CD4-positive, alpha-beta memory T cell (primary cell): ENCODE measurements at regions of chr3 and their contacts with region 1.

Region 1: GRCh38 chr3:50611464-50612233 is at the start of gene CISH:
- DNase-seq: peak; percentile 90 to 94 (median 93)
- H3K4me3 ChIP-seq: peak within 1 kb of the TSS; percentile 93 to 96
- H3K4me3 Mint-ChIP-seq: peak within 1 kb of the TSS; percentile 92 to 99 (median 96)
- H3K27ac ChIP-seq: peak within 1 kb of the TSS; percentile 81
- H3K27ac Mint-ChIP-seq: peak within 1 kb of the TSS; percentile 90 to 97 (median 94)
- H3K4me1 ChIP-seq: peaks cover 66% of the 10 kb centered on the region
- H3K4me1 Mint-ChIP-seq: peaks cover 44 to 80% (median 63%) of the 10 kb centered on the region in 4 donors
- H3K27me3 ChIP-seq: no peaks in the 10 kb centered on the region
- H3K27me3 Mint-ChIP-seq: no peaks in the 10 kb centered on the region
- total RNA-seq, gene CISH: 14.7 to 15.2 TPM

Region 2: GRCh38 chr3:50316657-50317242 is 294.9 kb before region 1 on chr3:
- CTCF ChIA-PET with region 1: no interaction called
- POLR2A ChIA-PET with region 1: no interaction called
- intact Hi-C with region 1: no loop called
- DNase-seq: peak; percentile 62 to 92 (median 72)
- H3K4me3 ChIP-seq: peak overlapping the region in 1 of 2 donors; percentile 7
- H3K4me3 Mint-ChIP-seq: peak overlapping the region; percentile 74 to 92 (median 86)
- H3K27ac ChIP-seq: peak overlapping the region; percentile 49
- H3K27ac Mint-ChIP-seq: peak overlapping the region; percentile 79 to 99 (median 94)
- H3K4me1 ChIP-seq: peaks cover 41% of the 10 kb centered on the region
- H3K4me1 Mint-ChIP-seq: peaks cover 22 to 52% (median 37%) of the 10 kb centered on the region in 4 donors
- H3K27me3 ChIP-seq: no peaks in the 10 kb centered on the region
- H3K27me3 Mint-ChIP-seq: no peaks in the 10 kb centered on the region

Region 3: DNA sequence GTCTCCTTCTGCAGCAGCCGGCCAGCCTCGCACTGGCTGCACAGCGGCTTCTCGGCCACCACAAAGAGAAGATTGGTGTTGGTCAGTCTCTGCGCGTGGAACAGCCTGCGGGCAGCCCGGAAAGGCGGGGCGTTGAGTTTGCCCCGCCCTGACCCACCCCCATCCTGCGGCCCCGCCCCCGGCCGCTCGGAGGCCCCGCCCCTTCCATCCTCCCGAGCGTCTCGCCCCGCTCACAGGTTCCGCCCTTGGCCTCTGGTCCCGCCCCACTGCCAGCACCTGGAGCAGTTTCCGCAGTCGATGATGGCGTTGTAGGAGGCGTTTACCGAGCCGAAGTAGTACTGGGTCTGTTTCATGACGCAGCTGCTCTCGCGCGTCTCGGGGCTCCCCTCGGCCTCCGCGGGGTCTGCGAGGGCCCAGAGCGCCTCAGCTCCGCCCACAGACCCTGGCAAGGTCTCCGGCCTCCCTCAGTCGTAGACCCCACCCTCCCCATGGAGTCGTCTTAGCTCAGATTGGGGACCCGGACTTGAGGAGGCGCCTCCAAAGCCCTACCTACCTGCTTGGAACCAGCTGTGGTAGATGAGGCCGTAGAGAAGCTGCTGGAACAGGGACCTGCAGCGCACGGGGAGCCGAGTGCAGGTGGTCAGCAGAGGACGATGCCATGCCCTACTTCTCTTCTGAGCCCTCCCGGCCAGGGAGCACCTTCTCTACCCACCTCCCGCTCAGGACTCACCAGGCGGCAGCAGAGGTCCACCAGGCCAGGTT is 246.4 kb before region 1 on chr3:
- CTCF ChIA-PET with region 1: no interaction called
- POLR2A ChIA-PET with region 1: interaction called, 6 read pairs
- intact Hi-C with region 1: loop called (anchors 5 kb)
- DNase-seq: peak; percentile 92 to 97 (median 95)
- H3K4me3 ChIP-seq: peak overlapping the region; percentile 73 to 100
- H3K4me3 Mint-ChIP-seq: peak overlapping the region; percentile 86 to 94 (median 90)
- H3K27ac ChIP-seq: peak overlapping the region; percentile 87
- H3K27ac Mint-ChIP-seq: peak overlapping the region; percentile 91 to 97 (median 95)
- H3K4me1 ChIP-seq: peaks cover 30% of the 10 kb centered on the region
- H3K4me1 Mint-ChIP-seq: peaks cover 4 to 35% (median 18%) of the 10 kb centered on the region in 4 donors
- H3K27me3 ChIP-seq: no peaks in the 10 kb centered on the region
- H3K27me3 Mint-ChIP-seq: peaks cover 0 to 1% of the 10 kb centered on the region in 2 donors

Region 4: GRCh38 chr3:50587806-50588758 is 23.6 kb before region 1 on chr3:
- CTCF ChIA-PET with region 1: interaction called, 996 read pairs
- POLR2A ChIA-PET with region 1: interaction called, 1,072 read pairs
- intact Hi-C with region 1: loop called (anchors 1 kb)
- DNase-seq: peak in 4 of 5 donors; percentile 33 to 81 (median 39)
- H3K4me3 ChIP-seq: peak overlapping the region in 1 of 2 donors; percentile 29
- H3K4me3 Mint-ChIP-seq: peak overlapping the region; percentile 52 to 84 (median 74)
- H3K27ac ChIP-seq: peak overlapping the region; percentile 51
- H3K27ac Mint-ChIP-seq: peak overlapping the region; percentile 83 to 97 (median 93)
- H3K4me1 ChIP-seq: peaks cover 74% of the 10 kb centered on the region
- H3K4me1 Mint-ChIP-seq: peaks cover 44 to 79% (median 60%) of the 10 kb centered on the region in 4 donors
- H3K27me3 ChIP-seq: no peaks in the 10 kb centered on the region
- H3K27me3 Mint-ChIP-seq: no peaks in the 10 kb centered on the region

Region 5: DNA sequence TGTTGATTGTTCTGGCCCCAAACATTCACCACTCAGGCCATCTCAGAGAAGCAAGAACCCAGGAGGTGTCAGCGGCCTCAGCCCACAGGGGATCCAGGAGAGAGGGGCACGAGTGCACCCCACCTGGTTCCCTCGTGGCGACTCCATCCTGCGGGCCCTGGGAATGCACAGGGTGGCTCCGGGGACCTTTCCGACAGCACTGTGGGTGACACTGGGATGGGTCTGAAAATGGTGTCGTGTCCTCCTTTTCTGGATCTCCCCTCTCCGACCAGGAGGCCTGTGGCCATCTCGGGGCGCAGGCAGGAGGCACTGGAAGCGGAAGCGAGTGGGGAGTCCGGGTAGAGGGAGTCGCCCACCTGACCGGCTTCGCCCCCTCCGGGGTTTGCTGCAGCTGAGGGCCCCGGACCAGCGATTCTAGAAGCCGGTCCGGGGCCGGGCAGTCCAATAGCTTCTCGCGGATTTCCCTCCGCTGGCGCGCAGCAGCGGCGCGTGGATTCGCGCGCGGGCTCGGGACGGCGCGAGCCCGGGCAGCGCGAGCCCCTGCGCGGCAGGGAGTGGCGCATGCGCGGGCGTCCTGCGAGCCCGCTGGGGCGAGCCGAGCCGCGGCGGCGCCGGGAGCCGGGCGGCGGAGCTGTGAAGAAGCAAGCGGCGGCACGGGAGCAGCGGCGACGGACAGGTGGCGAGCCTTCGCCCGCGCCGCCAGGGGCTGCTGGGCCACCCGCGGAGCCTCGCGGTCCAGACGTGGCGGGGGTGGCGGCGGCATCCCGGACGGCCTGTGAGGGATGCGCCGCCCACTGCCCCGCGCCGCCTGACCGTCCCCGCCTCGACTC is 62.9 kb after region 1 on chr3 and contains the start of gene DOCK3:
- CTCF ChIA-PET with region 1: interaction called, 7 read pairs
- POLR2A ChIA-PET with region 1: interaction called, 5 read pairs
- intact Hi-C with region 1: loop called (anchors 1 kb)
- DNase-seq: peak; percentile 49 to 72 (median 70)
- H3K4me3 ChIP-seq: peak within 1 kb of the TSS in 1 of 2 donors; percentile 44
- H3K4me3 Mint-ChIP-seq: peak within 1 kb of the TSS; percentile 55 to 89 (median 82)
- H3K27ac ChIP-seq: no peak within 1 kb of the TSS
- H3K27ac Mint-ChIP-seq: peak within 1 kb of the TSS in 6 of 7 donors; percentile 4 to 76 (median 32)
- H3K4me1 ChIP-seq: peaks cover 9% of the 10 kb centered on the region
- H3K4me1 Mint-ChIP-seq: peaks cover 2 to 9% (median 6%) of the 10 kb centered on the region in 4 donors
- H3K27me3 ChIP-seq: peaks cover 4% of the 10 kb centered on the region
- H3K27me3 Mint-ChIP-seq: peaks cover 7 to 8% of the 10 kb centered on the region in 2 donors
- total RNA-seq, gene DOCK3: 2.5 to 2.6 TPM

Region 6: DNA sequence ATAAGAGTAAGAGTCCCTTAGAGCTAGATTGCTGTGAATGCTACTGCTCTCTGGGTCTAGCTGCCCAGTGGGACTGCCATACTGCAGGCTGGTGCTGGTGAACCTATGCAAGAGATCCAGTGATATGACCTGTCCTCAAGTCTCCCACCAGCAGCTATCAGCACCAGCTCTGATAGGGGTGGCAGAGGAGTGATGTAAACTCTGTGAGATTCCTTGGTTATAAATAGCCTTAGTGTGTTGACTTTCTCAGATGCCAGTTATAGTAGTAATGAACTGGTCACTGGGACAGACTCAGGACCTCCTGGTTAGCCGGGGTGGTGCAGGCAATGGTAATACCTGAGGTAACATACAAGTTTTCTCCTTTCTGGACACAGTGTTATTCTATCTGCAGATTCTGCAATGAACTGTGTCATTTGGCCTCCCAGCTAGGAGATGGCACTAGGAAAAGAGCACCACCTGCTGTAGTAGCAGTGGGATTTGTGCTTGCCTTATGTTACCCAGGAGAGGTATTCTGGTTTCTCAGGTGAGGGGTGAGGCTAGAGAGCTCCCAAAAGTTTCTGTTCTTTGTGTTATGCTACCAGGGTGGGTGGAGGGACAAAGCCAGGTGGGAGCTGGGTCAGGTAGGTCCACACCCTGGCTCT is 578.7 kb after region 1 on chr3:
- CTCF ChIA-PET with region 1: interaction called, 9 read pairs
- POLR2A ChIA-PET with region 1: no interaction called
- intact Hi-C with region 1: loop called (anchors 2 kb)
- DNase-seq: peak in 4 of 5 donors; percentile 6 to 10 (median 7)
- H3K4me3 ChIP-seq: no peak overlapping the region
- H3K4me3 Mint-ChIP-seq: no peak overlapping the region
- H3K27ac ChIP-seq: no peak overlapping the region
- H3K27ac Mint-ChIP-seq: peak overlapping the region in 1 of 7 donors; percentile 45
- H3K4me1 ChIP-seq: no peaks in the 10 kb centered on the region
- H3K4me1 Mint-ChIP-seq: peaks cover 0 to 9% (median 8%) of the 10 kb centered on the region in 4 donors
- H3K27me3 ChIP-seq: no peaks in the 10 kb centered on the region
- H3K27me3 Mint-ChIP-seq: peaks cover 0 to 2% of the 10 kb centered on the region in 2 donors

Region 7: DNA sequence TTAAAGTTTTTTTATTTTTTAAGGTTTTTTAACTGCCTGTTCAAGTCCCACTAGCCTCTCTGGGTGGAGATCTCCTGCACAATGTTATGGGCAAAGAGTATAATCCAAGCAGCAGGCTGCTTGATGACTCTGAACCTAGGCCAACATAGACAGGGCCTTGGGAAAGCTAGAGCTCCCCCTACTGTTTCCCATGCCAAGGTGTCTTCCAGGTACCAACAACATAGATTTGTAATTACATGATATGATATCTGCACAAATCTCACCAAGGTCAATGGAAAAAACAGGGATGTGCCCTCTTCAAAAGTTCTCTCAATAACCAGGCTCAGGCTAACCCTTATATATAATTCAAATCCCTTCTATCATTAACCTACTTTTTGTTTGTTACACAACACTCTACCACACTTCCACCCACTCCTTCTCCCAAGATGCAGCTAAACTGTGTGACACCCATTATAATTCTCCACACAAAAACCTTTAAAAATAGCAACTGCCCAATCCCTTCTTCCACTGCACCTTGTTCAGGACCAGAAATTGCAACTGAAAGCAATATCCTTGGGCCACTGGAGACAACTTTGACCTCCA is 823.2 kb after region 1 on chr3:
- CTCF ChIA-PET with region 1: interaction called, 5 read pairs
- POLR2A ChIA-PET with region 1: no interaction called
- intact Hi-C with region 1: loop called (anchors 1 kb)
- DNase-seq: peak; percentile 48 to 56 (median 53)
- H3K4me3 ChIP-seq: no peak overlapping the region
- H3K4me3 Mint-ChIP-seq: no peak overlapping the region
- H3K27ac ChIP-seq: no peak overlapping the region
- H3K27ac Mint-ChIP-seq: peak overlapping the region in 6 of 7 donors; percentile 31 to 81 (median 55)
- H3K4me1 ChIP-seq: no peaks in the 10 kb centered on the region
- H3K4me1 Mint-ChIP-seq: peaks cover 7 to 13% (median 8%) of the 10 kb centered on the region in 4 donors
- H3K27me3 ChIP-seq: no peaks in the 10 kb centered on the region
- H3K27me3 Mint-ChIP-seq: no peaks in the 10 kb centered on the region